Dendritic cell treated with granulocyte-macrophage colony-stimulating factor and Interleukin-4, amounts not matched to agents 40 ng/mL and 50 ng/mL, for 4 days (primary cell): ENCODE measurements at regions of chr20 and their contacts with region 1.

Region 1: DNA sequence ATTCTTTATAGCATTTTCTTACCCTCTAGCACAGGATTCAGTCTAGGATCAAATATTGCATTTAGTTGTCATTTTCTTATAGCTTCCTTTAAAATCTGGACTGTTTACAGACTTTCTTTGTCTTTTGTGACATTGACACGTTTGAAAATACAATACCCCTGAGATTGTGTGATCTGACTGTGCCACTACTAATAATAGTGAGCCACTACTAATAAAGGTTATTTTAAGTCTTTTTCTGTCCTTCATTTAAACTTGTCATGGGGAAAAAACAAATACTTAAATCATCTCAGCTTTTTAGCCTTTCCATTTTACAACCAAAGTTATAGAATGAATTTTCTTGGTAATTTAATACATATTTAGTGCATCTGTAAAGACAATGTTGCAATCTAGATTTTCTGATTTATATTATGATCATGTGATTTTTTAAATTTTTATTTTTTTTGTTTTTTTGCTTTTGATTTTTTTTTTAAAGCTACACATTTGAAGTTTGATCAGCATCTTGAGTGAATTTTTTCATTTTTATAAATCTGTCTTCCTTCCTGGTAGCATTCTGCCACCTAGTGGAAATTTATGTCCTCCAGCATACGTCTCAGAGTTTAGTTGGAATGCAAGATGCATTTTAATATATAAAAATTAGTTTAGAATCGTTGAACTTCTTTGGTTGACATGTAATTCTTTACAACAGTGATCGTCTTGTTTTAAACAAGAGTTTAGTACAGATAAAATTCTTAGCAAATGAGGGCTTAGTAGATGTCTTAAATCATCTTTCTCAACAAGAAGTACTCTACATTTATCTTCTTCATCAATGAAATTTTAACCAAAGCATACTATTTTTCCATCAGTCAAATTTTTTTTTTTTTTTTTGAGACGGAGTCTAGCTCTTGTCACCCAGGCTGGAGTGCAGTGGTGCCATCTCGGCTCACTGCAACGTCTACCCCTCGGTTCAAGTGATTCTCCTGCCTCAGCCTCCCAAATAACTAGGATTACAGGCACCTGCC is 119.4 kb downstream of the NCOA3 start:
- H3K4me3 Mint-ChIP-seq: no peak overlapping the region
- H3K27ac Mint-ChIP-seq: no peak overlapping the region
- H3K4me1 Mint-ChIP-seq: no peaks in the 10 kb centered on the region
- H3K27me3 Mint-ChIP-seq: no peaks in the 10 kb centered on the region

Region 2: DNA sequence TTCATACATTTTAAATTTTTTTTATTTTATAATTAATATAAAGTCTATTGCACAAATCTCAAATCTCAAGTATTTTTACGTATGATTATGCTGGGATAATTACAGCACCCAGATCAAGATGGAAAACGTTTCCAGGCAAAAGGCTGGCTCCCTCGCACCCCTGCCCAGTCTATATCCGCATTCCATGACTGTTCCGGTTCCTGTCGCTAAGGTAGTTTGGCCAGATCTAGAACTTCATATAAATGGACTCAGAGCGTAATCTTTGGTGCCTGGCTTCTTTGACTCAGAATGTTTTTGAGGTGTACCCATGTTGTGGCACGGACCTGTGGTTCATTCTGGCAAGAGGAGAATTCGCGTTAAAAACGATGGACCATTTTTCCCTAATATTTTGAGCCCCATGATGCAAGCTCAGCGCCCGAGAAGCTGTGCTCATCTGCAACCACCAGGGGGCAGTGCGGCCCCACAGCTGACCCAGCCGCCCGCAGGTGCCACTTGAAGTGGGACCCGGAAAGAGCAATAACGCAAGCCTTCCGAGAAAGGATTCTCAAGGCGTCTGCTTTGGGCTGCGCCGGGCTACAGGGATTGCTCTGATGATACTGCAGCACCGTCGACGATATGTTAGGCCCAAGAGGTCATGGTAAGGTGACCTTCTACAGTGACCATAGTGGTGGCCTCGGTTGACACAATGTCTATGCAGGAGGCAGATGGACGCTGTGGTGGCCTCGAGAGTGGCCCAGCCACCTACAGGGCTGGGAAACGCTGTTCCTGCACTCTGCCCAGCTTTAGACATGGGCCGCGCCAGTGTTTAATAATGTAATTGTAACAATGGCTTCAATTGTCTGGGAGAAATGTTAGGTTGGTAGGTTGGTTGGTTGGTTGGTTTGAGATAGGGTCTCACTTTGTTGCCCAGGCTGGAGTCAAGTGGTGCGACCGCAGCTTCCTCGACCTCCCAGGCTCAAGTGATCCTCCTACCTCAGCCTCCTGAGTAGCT is 424.7 kb before region 1 on chr20:
- intact Hi-C with region 1: loop called (anchors 2 kb)
- H3K4me3 Mint-ChIP-seq: no peak overlapping the region
- H3K27ac Mint-ChIP-seq: no peak overlapping the region
- H3K4me1 Mint-ChIP-seq: no peaks in the 10 kb centered on the region
- H3K27me3 Mint-ChIP-seq: peaks cover 2% of the 10 kb centered on the region

Region 3: GRCh38 chr20:47296950-47297349 is 324.2 kb before region 1 on chr20:
- intact Hi-C with region 1: loop called (anchors 10 kb)
- H3K4me3 Mint-ChIP-seq: no peak overlapping the region
- H3K27ac Mint-ChIP-seq: peak overlapping the region; percentile 51
- H3K4me1 Mint-ChIP-seq: peaks cover 15% of the 10 kb centered on the region
- H3K27me3 Mint-ChIP-seq: no peaks in the 10 kb centered on the region

Region 4: GRCh38 chr20:47389867-47390347 is 231.2 kb before region 1 on chr20:
- intact Hi-C with region 1: loop called (anchors 10 kb)
- H3K4me3 Mint-ChIP-seq: no peak overlapping the region
- H3K27ac Mint-ChIP-seq: no peak overlapping the region
- H3K4me1 Mint-ChIP-seq: peaks cover 25% of the 10 kb centered on the region
- H3K27me3 Mint-ChIP-seq: no peaks in the 10 kb centered on the region